ENCODE measurements at regions of chr12 and their contacts with region 1.

Region 1: DNA sequence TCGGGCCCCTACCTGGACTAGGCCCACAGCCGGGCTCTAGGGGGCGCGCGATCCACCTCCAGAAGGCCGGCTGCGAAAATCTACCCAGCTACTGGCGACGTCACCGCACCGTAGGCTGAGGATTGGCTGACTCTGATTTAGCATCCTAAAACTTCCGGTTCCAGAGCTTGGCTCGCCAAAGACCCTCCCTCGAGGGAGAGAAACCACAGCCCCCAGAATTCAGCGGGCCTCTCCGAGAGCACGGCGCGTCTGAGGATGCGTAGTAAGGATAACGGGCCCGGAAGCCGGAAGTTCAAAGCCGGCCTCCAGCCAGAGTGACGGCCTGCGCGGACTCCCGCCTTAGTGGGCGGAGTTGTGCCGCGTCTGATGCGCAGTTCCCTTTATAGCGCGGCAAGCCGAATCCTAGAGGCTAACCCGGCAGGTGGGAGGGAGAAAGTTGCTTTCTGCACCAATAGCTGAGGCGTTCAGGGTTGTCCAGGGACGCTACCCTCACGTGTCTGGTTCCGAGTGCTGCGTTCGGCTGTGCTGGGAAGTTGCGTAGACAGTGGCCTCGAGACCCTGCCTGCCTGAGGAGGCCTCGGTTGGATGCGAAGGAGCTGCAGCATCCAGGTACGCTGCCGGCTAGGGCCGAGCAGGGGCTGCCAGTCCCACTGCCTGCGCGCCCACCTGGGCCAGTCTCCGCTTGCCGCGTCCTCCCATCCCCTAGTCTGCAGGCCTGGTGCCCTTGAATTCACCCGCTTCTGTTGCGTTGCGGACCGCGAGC is at the start of gene COX14:
- DNase-seq: peak; percentile 100
- H3K4me3 Mint-ChIP-seq: peak within 1 kb of the TSS; percentile 92
- H3K27ac Mint-ChIP-seq: peak within 1 kb of the TSS; percentile 93
- H3K4me1 Mint-ChIP-seq: peaks cover 39% of the 10 kb centered on the region
- H3K27me3 Mint-ChIP-seq: no peaks in the 10 kb centered on the region
- total RNA-seq, gene COX14: 46.1 to 48.7 TPM

Region 2: DNA sequence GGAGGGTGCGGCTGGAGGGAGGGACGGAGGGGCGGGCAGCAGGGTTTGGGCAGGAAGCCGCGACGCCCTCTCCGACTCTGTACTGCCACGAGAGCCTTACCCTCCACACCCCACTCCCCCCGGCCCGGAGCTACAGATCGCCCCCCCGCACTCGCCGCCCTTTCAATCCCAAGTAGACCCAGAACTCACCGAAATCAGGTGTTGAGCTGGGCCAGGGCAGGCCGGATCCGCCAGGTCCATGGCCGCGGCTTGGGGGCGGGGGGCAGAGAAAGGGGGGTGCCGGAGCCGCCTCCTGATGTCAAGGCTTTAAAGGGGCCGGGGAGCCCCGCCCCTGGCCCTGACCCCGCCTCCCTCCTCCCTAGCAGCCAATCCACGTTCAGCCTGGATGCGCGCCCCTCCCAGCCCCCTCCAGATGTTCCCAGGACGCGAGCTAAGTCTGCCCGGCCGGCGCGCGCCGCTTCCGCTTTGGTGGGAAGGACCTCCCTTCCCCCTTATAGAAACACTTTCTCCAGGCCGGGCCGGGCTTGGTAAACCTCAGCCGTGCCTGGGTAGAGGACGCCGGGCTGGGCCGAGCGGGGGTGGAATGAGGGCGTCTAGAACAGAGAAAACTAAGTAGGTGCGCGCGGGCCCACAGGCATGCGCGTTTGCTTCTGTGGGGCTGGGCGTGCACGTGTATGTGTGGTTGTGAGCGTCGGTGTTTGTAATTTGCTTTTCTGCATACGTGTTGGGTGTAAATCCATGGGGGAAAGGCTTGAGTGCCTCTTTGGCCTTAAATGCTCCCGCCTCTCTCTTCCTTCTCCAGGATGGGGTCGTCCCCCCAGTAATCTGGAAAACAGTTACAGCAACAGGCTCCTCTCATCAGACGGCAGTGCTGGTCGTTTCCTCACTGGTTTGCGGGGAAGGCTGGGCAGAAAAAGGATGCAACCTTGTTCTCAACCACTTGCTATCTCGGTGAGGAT is 283.5 kb before region 1 on chr12 and contains the start of gene NCKAP5L:
- CTCF ChIA-PET with region 1: no interaction called
- POLR2A ChIA-PET with region 1: no interaction called
- intact Hi-C with region 1: no loop called
- DNase-seq: peak; percentile 96
- H3K4me3 Mint-ChIP-seq: peak within 1 kb of the TSS; percentile 93
- H3K27ac Mint-ChIP-seq: peak within 1 kb of the TSS; percentile 88
- H3K4me1 Mint-ChIP-seq: peaks cover 20% of the 10 kb centered on the region
- H3K27me3 Mint-ChIP-seq: no peaks in the 10 kb centered on the region
- total RNA-seq, gene NCKAP5L: 2.9 to 3.0 TPM

Region 3: GRCh38 chr12:50074936-50075807 is 36.7 kb before region 1 on chr12:
- CTCF ChIA-PET with region 1: interaction called, 17 read pairs
- POLR2A ChIA-PET with region 1: no interaction called
- intact Hi-C with region 1: no loop called
- DNase-seq: peak; percentile 87
- H3K4me3 Mint-ChIP-seq: no peak overlapping the region
- H3K27ac Mint-ChIP-seq: no peak overlapping the region
- H3K4me1 Mint-ChIP-seq: peaks cover 7% of the 10 kb centered on the region
- H3K27me3 Mint-ChIP-seq: no peaks in the 10 kb centered on the region

Region 4: GRCh38 chr12:50127546-50127945 is 15.7 kb after region 1 on chr12:
- CTCF ChIA-PET with region 1: interaction called, 128 read pairs
- POLR2A ChIA-PET with region 1: interaction called, 12 read pairs
- intact Hi-C with region 1: no loop called
- DNase-seq: no peak
- H3K4me3 Mint-ChIP-seq: no peak overlapping the region
- H3K27ac Mint-ChIP-seq: no peak overlapping the region
- H3K4me1 Mint-ChIP-seq: peaks cover 14% of the 10 kb centered on the region
- H3K27me3 Mint-ChIP-seq: no peaks in the 10 kb centered on the region

Region 5: GRCh38 chr12:50157259-50157658 is 45.4 kb after region 1 on chr12:
- CTCF ChIA-PET with region 1: interaction called, 13 read pairs
- POLR2A ChIA-PET with region 1: interaction called, 4 read pairs
- intact Hi-C with region 1: no loop called
- DNase-seq: no peak
- H3K4me3 Mint-ChIP-seq: no peak overlapping the region
- H3K27ac Mint-ChIP-seq: peak overlapping the region; percentile 64
- H3K4me1 Mint-ChIP-seq: peaks cover 34% of the 10 kb centered on the region
- H3K27me3 Mint-ChIP-seq: no peaks in the 10 kb centered on the region

Region 6: GRCh38 chr12:50187084-50187900 is 75.4 kb after region 1 on chr12:
- CTCF ChIA-PET with region 1: interaction called, 19 read pairs
- POLR2A ChIA-PET with region 1: interaction called, 3 read pairs
- intact Hi-C with region 1: no loop called
- DNase-seq: peak; percentile 81
- H3K4me3 Mint-ChIP-seq: peak overlapping the region; percentile 46
- H3K27ac Mint-ChIP-seq: peak overlapping the region; percentile 99
- H3K4me1 Mint-ChIP-seq: peaks cover 55% of the 10 kb centered on the region
- H3K27me3 Mint-ChIP-seq: no peaks in the 10 kb centered on the region

Region 7: GRCh38 chr12:50314629-50315312 is 202.9 kb after region 1 on chr12:
- CTCF ChIA-PET with region 1: interaction called, 19 read pairs
- POLR2A ChIA-PET with region 1: no interaction called
- intact Hi-C with region 1: loop called (anchors 10 kb)
- DNase-seq: no peak
- H3K4me3 Mint-ChIP-seq: no peak overlapping the region
- H3K27ac Mint-ChIP-seq: no peak overlapping the region
- H3K4me1 Mint-ChIP-seq: no peaks in the 10 kb centered on the region
- H3K27me3 Mint-ChIP-seq: no peaks in the 10 kb centered on the region

Measured in activated CD4-positive, alpha-beta memory T cell treated with anti-CD3 and anti-CD28 coated beads for 36 hours (primary cell).